GM12878 (cell line): ENCODE measurements at regions of chr1 and their contacts with region 1.

Region 1: DNA sequence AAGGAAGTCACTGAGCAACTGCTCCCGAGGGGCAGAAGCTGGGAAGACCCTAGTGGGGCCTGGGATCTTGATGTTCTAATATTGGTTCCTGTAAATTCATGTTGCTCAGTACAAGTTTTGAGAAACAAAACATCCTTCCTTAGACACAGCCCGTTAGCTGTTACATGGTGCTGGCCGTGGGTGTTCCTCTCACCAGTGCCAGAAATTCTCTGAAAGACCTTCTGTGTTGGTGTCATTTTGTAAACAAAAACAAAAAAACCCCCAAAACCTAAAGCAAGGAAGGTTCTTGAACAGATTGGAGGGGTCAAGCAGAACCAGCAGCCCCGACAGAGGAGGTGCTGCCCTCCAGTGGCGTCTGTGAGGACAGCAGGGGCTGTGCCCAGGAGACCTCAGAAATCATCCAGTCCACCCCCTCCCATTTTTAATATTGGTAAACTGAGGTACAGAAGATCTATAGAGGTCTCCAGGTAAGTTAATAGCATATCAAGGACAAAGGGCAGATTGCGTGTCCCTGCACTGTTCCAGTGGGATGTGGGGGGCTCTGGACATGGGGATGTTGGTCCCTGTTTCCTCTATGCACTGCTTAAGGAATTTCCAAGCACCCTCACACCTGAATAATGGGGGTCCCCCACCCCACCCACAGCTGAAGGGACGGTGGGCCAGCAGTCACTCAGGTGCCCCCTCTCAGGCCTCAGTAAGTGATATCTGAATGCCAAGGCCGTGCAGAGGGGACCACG is 38.2 kb downstream of the SLC2A7 start:
- DNase-seq: no peak
- ATAC-seq: peak; percentile 92
- H3K4me3 ChIP-seq: no peak overlapping the region
- H3K27ac ChIP-seq: no peak overlapping the region
- H3K4me1 ChIP-seq: no peaks in the 10 kb centered on the region
- H3K27me3 ChIP-seq: no peaks in the 10 kb centered on the region
- CTCF ChIP-seq: peak; percentile 82 to 91 (median 91)
- EP300 ChIP-seq: no peak
- POLR2A ChIP-seq: no peak
- RAD21 ChIP-seq: peak; percentile 80

Region 2: DNA sequence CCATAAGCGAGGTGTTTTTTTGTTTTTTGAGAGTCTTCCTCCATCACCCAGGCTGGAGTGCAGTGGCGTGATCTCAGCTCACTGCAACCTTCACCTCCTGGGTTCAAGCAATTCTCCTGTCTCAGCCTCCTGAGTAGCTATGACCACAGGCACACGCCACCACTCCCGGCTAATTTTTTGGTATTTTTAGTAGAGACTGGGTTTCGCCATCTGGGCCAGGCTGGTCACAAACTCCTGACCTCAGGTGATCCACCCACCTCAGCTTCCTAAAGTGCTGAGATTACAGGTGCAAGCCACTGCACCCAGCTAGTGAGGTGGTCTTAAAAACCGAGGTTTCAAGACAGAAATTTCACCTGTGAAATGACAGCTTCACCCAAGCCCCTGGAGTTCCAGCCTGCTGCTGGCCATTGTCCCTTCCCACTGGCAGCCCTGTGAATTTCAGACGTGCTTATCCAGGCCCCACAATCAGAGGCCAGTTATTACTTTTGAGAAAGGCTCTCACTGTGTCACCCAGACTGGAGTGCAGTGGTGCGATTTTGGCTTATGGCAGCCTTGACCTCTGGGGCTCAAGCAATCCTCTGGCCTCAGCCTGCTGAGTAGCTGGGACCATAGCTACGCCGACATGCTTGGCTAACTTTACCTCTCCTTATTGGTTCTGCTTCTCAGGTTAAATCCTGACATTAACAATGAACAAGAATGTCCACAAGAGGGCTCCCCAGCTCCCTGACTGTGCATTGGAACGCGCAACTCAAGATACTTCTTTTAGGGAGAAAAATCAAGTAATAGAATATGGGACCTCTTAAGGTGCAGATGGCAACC is 129.0 kb before region 1 on chr1:
- CTCF ChIA-PET with region 1: interaction called, 6 read pairs
- POLR2A ChIA-PET with region 1: interaction called, 3 read pairs
- RAD21 ChIA-PET with region 1: no interaction called
- SMC1A ChIA-PET with region 1: no interaction called
- in situ Hi-C with region 1: no loop called
- intact Hi-C with region 1: loop called (anchors 5 kb)
- DNase-seq: no peak
- ATAC-seq: peak; percentile 72
- H3K4me3 ChIP-seq: no peak overlapping the region
- H3K27ac ChIP-seq: no peak overlapping the region
- H3K4me1 ChIP-seq: no peaks in the 10 kb centered on the region
- H3K27me3 ChIP-seq: no peaks in the 10 kb centered on the region
- CTCF ChIP-seq: peak; percentile 60 to 62 (median 62); a peak in 5 of 6 replicates
- EP300 ChIP-seq: no peak
- POLR2A ChIP-seq: peak; percentile 60
- RAD21 ChIP-seq: peak; percentile 42; the same call in 1 of the 2 replicates

Region 3: DNA sequence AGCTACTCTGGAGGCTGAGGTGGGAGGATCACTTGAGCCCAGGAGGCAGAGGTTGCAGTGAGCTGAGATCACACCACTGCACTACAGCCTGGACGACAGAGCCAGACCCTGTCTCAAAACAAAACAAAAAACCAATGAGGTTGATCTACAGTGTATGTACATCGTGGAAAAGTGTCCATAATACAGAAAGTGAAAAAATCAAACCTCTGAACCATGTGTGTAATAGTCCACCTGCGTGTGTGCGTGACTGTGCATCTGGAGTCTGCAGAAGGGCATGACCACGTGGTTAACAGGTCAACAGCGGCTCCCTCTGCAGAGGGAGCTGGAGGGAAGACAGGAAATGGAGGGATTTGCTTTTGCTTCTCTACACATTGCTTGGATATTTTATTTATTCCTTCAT is 77.1 kb before region 1 on chr1:
- CTCF ChIA-PET with region 1: interaction called, 12 read pairs
- POLR2A ChIA-PET with region 1: no interaction called
- RAD21 ChIA-PET with region 1: no interaction called
- SMC1A ChIA-PET with region 1: no interaction called
- in situ Hi-C with region 1: loop called (anchors 5 kb)
- intact Hi-C with region 1: no loop called
- DNase-seq: no peak
- ATAC-seq: no peak
- H3K4me3 ChIP-seq: no peak overlapping the region
- H3K27ac ChIP-seq: no peak overlapping the region
- H3K4me1 ChIP-seq: no peaks in the 10 kb centered on the region
- H3K27me3 ChIP-seq: peaks cover 0 to 3% of the 10 kb centered on the region in 2 experiments; a peak in 3 of 4 replicates
- CTCF ChIP-seq: no peak
- EP300 ChIP-seq: no peak
- POLR2A ChIP-seq: no peak
- RAD21 ChIP-seq: no peak

Region 4: GRCh38 chr1:8925406-8925805 is 62.6 kb before region 1 on chr1:
- CTCF ChIA-PET with region 1: interaction called, 12 read pairs
- POLR2A ChIA-PET with region 1: no interaction called
- RAD21 ChIA-PET with region 1: interaction called, 4 read pairs
- SMC1A ChIA-PET with region 1: interaction called, 4 read pairs
- in situ Hi-C with region 1: no loop called
- intact Hi-C with region 1: no loop called
- DNase-seq: no peak
- ATAC-seq: no peak
- H3K4me3 ChIP-seq: no peak overlapping the region
- H3K27ac ChIP-seq: no peak overlapping the region
- H3K4me1 ChIP-seq: no peaks in the 10 kb centered on the region; the same call in 1 of the 2 replicates
- H3K27me3 ChIP-seq: no peaks in the 10 kb centered on the region; a peak in 2 of 4 replicates
- CTCF ChIP-seq: no peak
- EP300 ChIP-seq: no peak
- POLR2A ChIP-seq: no peak
- RAD21 ChIP-seq: no peak

Region 5: GRCh38 chr1:8962812-8963530 is 25.1 kb before region 1 on chr1:
- CTCF ChIA-PET with region 1: interaction called, 13 read pairs
- POLR2A ChIA-PET with region 1: no interaction called
- RAD21 ChIA-PET with region 1: interaction called, 6 read pairs
- SMC1A ChIA-PET with region 1: interaction called, 6 read pairs
- in situ Hi-C with region 1: no loop called
- intact Hi-C with region 1: loop called (anchors 1 kb)
- DNase-seq: no peak
- ATAC-seq: peak; percentile 90
- H3K4me3 ChIP-seq: no peak overlapping the region
- H3K27ac ChIP-seq: no peak overlapping the region
- H3K4me1 ChIP-seq: no peaks in the 10 kb centered on the region; the same call in 1 of the 2 replicates
- H3K27me3 ChIP-seq: no peaks in the 10 kb centered on the region; a peak in 1 of 4 replicates
- CTCF ChIP-seq: peak; percentile 59 to 79 (median 66)
- EP300 ChIP-seq: no peak
- POLR2A ChIP-seq: no peak
- RAD21 ChIP-seq: peak; percentile 44